A673 (cell line): ENCODE measurements at regions of chr1 and their contacts with region 1.

Region 1: GRCh38 chr1:219416594-219417238 is 196.2 kb downstream of the ZC3H11B start:
- DNase-seq: peak; percentile 61
- H3K4me3 ChIP-seq: no peak overlapping the region
- H3K27ac ChIP-seq: no peak overlapping the region
- H3K4me1 ChIP-seq: no peaks in the 10 kb centered on the region
- H3K27me3 ChIP-seq: peaks cover 74% of the 10 kb centered on the region
- CTCF ChIP-seq: peak; percentile 77

Region 2: GRCh38 chr1:218339267-218339831 is 1077.4 kb before region 1 on chr1:
- CTCF ChIA-PET with region 1: no interaction called
- POLR2A ChIA-PET with region 1: no interaction called
- intact Hi-C with region 1: loop called (anchors 5 kb)
- DNase-seq: peak; percentile 47
- H3K4me3 ChIP-seq: no peak overlapping the region
- H3K27ac ChIP-seq: no peak overlapping the region
- H3K4me1 ChIP-seq: no peaks in the 10 kb centered on the region
- H3K27me3 ChIP-seq: no peaks in the 10 kb centered on the region
- CTCF ChIP-seq: peak; percentile 79

Region 3: DNA sequence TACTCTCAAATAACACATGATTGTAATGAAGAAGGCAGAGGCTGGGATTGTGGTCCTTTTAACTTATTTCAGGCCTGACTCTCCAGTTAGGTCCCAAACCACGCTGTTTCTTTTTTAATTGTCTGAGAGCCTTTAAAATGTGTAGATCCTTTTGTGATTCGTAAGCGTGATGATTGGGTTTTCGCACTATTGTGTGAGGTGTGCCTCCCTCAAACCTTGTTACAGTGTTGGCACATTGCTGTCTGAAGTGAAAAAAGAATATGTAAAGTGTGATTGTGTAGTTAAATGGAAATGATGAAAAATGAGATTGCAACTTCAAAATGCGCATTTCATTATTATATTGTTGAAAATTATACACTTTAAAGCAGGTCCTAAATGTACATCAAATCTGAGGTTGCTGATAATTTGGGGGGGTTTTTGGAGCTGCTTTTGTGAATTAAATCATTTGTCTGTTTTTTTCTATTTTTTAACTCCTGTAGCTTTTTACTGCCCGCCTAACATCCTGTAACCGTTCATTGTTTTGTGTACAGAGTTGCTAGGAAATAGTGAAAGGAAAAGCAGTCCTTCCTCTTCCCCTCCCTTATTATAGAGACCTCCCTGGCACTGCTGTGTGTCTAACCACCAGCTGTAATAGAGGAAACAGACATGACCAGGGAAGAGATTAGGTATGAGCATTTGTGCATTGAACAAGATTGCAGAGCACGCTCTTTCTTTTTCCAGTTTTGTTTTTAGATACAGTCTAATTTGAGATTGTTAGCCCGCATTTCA is 720.5 kb after region 1 on chr1:
- CTCF ChIA-PET with region 1: no interaction called
- POLR2A ChIA-PET with region 1: no interaction called
- intact Hi-C with region 1: no loop called
- DNase-seq: no peak
- H3K4me3 ChIP-seq: no peak overlapping the region
- H3K27ac ChIP-seq: no peak overlapping the region
- H3K4me1 ChIP-seq: no peaks in the 10 kb centered on the region
- H3K27me3 ChIP-seq: no peaks in the 10 kb centered on the region
- CTCF ChIP-seq: no peak